Psoas muscle (tissue), 8 donors: ENCODE measurements at regions of chr7 and their contacts with region 1.

Region 1: GRCh38 chr7:129875745-129876411 is 76.9 kb downstream of the UBE2H start:
- DNase-seq: no peak
- ATAC-seq: peak; percentile 48 to 80 (median 76)
- H3K4me3 ChIP-seq: peak overlapping the region; percentile 43
- H3K27ac ChIP-seq: peak overlapping the region; percentile 60
- H3K4me1 ChIP-seq: peaks cover 43% of the 10 kb centered on the region
- H3K27me3 ChIP-seq: no peaks in the 10 kb centered on the region
- CTCF ChIP-seq: no peak

Region 2: DNA sequence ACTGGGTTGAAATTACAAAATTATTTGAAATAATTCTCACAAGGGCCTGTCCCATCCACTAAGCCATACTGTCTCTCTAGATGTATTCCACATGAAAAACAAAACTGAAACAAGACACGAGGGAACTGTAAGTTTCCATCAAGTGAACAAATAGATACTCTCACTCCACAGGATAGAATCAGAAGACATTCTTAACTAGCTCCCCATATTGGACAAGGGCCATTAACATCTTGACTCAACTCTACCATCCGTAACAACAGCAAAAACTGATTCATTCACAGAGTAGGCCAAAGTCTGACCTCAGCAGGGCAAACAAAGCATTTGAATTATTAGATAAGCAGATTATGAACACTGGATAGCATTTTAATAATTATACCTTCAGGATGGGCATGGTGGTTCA is 47.8 kb after region 1 on chr7:
- intact Hi-C with region 1: loop called in 1 of 2 experiments (anchors 10 kb)
- DNase-seq: no peak
- ATAC-seq: peak; percentile 30 to 72 (median 60)
- H3K4me3 ChIP-seq: no peak overlapping the region
- H3K27ac ChIP-seq: peak overlapping the region; percentile 57
- H3K4me1 ChIP-seq: peaks cover 52% of the 10 kb centered on the region
- H3K27me3 ChIP-seq: no peaks in the 10 kb centered on the region
- CTCF ChIP-seq: no peak